Activated CD8-positive, alpha-beta T cell treated with anti-CD3 and anti-CD28 coated beads, Interleukin-2, amount 10 ng/mL, durations not matched to agents 7 days and 5 days (primary cell): ENCODE measurements at regions of chr9 and their contacts with region 1.

Region 1: GRCh38 chr9:112717661-112718341 is at the start of gene INIP:
- DNase-seq: peak; percentile 99
- ATAC-seq: peak; percentile 95
- H3K4me3 Mint-ChIP-seq: peak within 1 kb of the TSS; percentile 92
- H3K27ac Mint-ChIP-seq: peak within 1 kb of the TSS; percentile 98
- H3K4me1 Mint-ChIP-seq: peaks cover 28% of the 10 kb centered on the region
- H3K27me3 Mint-ChIP-seq: no peaks in the 10 kb centered on the region
- total RNA-seq, gene INIP: 32.1 to 32.8 TPM

Region 2: DNA sequence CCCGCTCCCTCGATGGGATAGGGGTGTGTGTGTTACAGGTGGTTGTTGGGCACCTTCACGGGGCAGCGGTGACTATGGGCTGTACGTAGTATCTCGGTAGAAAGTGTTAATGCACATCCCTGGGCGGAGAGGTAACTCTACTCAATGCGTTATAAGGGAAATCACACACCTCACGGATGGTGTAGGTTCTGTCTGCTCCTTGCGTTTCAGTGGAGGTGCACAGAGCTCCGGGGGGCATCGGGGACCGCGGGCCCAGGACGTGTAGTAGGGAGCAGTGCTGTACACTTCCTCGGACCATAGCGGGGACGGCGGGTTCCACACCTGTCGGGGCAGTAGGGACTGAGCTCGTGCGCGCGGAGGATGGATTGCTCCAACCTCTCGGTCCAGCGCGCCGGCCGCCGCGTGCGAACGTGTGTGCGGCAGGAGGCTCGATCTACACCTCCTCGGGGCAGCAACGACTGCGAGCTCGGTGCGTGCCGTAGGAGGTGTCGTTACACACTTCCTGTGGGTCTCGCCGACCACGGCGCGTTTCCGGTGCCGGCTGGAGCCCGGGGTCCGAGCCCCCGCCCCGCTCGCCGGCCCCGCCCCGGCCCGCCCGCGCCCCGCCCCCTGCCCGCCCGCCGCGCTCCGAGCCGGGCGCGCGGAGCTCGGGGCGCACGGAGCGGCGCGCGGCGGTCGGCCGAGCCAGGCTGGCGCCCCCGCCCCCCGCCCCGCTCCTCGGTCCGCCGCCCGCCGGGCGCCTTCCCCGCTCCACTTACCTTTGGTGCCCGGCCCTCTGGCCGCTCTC is 231.4 kb before region 1 on chr9 and contains the start of gene KIAA1958:
- CTCF ChIA-PET with region 1: interaction called, 13 read pairs
- POLR2A ChIA-PET with region 1: interaction called, 11 read pairs
- DNase-seq: peak; percentile 92
- ATAC-seq: peak; percentile 91
- H3K4me3 Mint-ChIP-seq: peak within 1 kb of the TSS; percentile 92
- H3K27ac Mint-ChIP-seq: peak within 1 kb of the TSS; percentile 96
- H3K4me1 Mint-ChIP-seq: peaks cover 36% of the 10 kb centered on the region
- H3K27me3 Mint-ChIP-seq: no peaks in the 10 kb centered on the region
- total RNA-seq, gene KIAA1958: 11.1 to 11.5 TPM

Region 3: DNA sequence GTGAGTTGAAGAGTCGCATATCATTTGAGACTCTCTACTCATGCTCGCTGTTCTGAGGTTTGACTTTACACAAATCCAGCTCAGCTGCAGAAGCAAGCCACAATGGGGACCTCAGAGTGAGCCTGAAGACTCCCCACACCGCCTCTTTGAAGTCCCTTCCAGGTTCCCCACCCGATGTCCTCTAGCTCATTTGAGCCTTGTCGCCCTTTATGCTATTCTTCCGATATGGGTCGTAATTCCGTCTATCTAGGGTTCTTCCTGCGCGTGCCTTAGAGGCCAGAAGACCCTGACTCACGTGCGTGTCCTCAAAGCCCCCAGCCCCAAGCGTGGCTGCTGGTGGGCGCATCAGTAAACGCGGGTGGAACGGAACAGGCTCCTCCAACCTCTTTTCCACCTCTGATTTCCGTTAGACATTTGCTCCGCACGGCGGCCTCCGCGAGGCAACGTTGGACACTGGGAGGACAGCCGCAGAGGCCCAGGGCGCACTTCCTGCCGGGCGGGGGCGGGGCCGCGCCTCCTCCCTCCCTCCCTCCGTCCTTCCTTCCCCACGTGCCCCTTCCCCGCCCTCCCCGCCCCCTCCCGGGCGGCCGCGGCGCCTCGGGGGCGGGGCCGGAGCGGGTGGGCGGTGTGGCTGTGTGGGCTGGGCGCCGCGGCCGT is 32.4 kb after region 1 on chr9 and contains the start of gene SNX30:
- CTCF ChIA-PET with region 1: interaction called, 22 read pairs
- POLR2A ChIA-PET with region 1: interaction called, 9 read pairs
- DNase-seq: peak; percentile 83
- ATAC-seq: peak; percentile 62
- H3K4me3 Mint-ChIP-seq: peak within 1 kb of the TSS; percentile 77
- H3K27ac Mint-ChIP-seq: peak within 1 kb of the TSS; percentile 88
- H3K4me1 Mint-ChIP-seq: peaks cover 66% of the 10 kb centered on the region
- H3K27me3 Mint-ChIP-seq: no peaks in the 10 kb centered on the region
- total RNA-seq, gene SNX30: 5.5 to 7.2 TPM

Region 4: DNA sequence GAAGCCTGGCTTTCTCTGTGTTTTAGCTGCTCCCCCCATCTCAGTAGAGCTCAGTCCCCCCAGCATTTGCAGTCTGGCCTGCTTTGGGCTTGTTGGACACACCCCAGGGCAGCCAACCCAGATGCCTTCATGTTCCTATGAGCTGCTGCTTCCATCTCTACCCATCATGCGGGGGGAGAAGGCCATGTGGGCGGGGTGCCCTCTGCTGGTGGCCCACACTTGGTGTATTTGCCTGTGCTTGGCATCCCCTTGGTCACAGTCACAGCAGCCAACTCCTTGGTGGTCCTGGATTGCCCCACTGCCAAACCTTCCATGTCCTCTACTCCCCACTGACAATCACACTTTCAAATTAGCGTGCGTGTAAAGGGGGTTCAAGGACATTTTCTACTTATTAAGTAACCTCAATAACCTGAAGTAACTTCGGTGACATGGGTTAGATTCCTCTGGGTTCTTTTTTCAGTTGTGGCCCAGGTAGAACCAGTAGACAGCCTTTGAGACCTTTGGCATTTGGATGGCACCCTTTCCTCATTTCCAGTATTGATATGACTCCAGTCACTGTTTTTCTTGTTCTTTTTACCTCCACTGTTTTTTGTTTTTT is 75.5 kb after region 1 on chr9:
- CTCF ChIA-PET with region 1: interaction called, 39 read pairs
- POLR2A ChIA-PET with region 1: interaction called, 6 read pairs
- DNase-seq: peak; percentile 89
- ATAC-seq: peak; percentile 99
- H3K4me3 Mint-ChIP-seq: no peak overlapping the region
- H3K27ac Mint-ChIP-seq: no peak overlapping the region
- H3K4me1 Mint-ChIP-seq: peaks cover 6% of the 10 kb centered on the region
- H3K27me3 Mint-ChIP-seq: no peaks in the 10 kb centered on the region